PC-9 (cell line): ENCODE measurements at regions of chr2 and their contacts with region 1.

Region 1: DNA sequence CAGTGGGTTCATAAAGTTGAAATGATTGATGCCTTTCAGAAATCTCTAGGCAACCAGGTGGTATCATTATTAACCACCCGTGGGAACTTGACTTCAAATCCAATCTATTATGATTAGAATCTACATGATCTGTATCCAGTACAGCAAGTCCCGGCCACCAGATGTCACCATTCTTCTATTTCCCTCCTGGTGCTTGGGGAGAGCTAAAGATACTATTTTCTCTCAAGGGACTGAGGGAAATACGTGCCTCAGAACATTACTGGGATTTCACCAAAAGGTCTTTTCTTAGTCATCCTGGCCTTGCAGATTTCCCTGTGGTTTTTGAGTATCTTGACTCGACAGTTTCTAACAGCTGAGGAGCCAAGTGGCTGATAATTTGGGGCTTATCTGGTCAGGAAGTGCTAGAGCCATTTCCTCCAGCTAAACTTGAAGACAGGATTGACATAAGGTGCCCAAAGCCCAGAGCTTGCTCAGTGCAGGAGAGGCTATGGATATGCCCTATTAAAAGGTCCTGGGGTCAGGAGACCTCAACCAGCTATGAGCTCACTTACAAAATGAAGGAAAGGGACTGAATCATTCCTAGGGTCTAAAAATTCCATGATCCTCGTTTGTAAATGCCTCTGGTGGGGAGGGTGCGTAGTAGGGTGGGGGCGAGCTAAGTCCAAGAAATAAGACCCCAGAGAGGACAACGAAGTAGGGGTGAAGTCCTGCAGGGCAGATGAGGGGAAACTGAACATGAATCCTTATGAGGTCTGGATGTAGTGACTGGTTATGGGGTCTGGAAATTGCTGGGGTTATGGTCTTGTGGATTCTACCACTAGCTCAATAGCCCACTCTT is 135.4 kb upstream of the MGAT5 start:
- DNase-seq: peak; percentile 76 to 85
- H3K4me3 ChIP-seq: no peak overlapping the region
- H3K27ac ChIP-seq: peak overlapping the region; percentile 30; the same call in 1 of the 2 replicates
- H3K4me1 ChIP-seq: peaks cover 12% of the 10 kb centered on the region
- H3K27me3 ChIP-seq: no peaks in the 10 kb centered on the region
- CTCF ChIP-seq: peak; percentile 81

Region 2: DNA sequence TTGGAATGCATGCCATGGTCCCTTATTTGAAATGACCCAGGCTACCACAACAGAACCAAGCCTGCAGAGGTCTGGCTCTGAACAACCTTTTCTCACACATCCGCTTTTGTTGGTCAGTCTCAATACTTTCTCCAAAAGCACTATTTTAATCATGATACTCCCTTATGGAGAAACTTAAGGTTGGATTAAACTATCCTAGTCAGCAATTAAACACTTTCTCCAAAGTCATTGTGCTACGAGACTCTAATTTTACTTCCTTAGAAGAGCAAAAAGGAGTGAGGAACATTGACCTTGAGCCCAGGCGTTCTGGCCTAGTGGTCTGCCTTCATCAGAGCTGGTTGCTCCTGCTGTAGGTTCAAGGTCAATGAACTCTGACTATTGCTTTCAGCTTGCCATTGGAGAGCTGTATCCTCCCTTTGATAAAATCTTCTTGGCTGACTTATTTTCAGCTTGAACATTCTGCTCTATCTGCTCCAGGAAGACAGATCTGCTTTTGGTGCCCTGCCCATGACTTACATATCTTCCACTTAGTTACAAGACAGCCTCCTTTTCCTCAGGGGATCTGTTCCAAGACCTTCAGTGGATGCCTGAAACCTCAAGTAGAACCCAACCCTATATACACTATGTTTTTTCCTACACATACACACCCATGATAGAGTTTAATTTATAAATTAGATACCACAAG is 641.4 kb before region 1 on chr2:
- CTCF ChIA-PET with region 1: no interaction called
- POLR2A ChIA-PET with region 1: no interaction called
- intact Hi-C with region 1: no loop called
- DNase-seq: no peak
- H3K4me3 ChIP-seq: no peak overlapping the region
- H3K27ac ChIP-seq: no peak overlapping the region
- H3K4me1 ChIP-seq: no peaks in the 10 kb centered on the region
- H3K27me3 ChIP-seq: peaks cover 4% of the 10 kb centered on the region; the same call in 1 of the 2 replicates
- CTCF ChIP-seq: no peak

Region 3: DNA sequence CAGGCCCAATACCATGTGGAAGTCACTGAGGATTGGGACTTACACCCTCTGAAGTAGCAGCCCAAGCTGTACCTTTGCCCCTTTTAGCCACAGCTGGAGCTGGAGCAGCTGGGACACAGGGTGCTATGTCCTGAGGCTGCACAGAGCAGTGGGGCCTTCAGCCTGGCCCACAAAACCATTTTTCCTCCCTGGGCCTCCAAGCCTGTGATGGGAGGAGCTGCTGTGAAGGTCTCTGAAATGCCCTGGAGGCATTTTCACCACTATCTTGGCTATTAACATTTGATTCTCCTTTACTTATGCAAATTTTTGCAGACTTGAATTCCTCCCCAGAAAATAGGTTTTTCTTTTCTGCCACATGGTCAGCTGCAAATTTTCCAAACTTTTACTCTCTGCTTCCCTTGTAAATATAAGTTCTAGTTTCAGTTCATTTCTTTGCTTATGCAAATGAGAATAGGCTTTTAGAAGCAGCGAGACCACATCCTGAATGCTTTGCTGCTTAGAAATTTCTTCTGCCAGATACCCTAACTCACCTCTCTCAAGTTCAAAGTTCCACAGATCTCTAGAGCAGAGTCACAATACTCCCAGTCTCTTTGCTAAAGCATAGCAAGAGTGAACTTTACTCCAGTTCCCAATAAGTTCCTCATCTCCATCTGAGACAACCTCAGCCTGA is 78.5 kb before region 1 on chr2:
- CTCF ChIA-PET with region 1: no interaction called
- POLR2A ChIA-PET with region 1: no interaction called
- intact Hi-C with region 1: no loop called
- DNase-seq: no peak
- H3K4me3 ChIP-seq: no peak overlapping the region
- H3K27ac ChIP-seq: no peak overlapping the region
- H3K4me1 ChIP-seq: no peaks in the 10 kb centered on the region
- H3K27me3 ChIP-seq: peaks cover 21% of the 10 kb centered on the region
- CTCF ChIP-seq: no peak

Region 4: GRCh38 chr2:134189009-134189720 is 70.7 kb after region 1 on chr2:
- CTCF ChIA-PET with region 1: interaction called, 3 read pairs
- POLR2A ChIA-PET with region 1: no interaction called
- intact Hi-C with region 1: loop called (anchors 5 kb)
- DNase-seq: peak; percentile 67 to 95
- H3K4me3 ChIP-seq: peak overlapping the region; percentile 34; the same call in 1 of the 2 replicates
- H3K27ac ChIP-seq: peak overlapping the region; percentile 99
- H3K4me1 ChIP-seq: peaks cover 29% of the 10 kb centered on the region
- H3K27me3 ChIP-seq: no peaks in the 10 kb centered on the region
- CTCF ChIP-seq: no peak

Region 5: GRCh38 chr2:134245340-134245984 is 127.0 kb after region 1 on chr2:
- CTCF ChIA-PET with region 1: interaction called, 14 read pairs
- POLR2A ChIA-PET with region 1: interaction called, 6 read pairs
- intact Hi-C with region 1: loop called (anchors 1 kb)
- DNase-seq: peak; percentile 46 to 63
- H3K4me3 ChIP-seq: no peak overlapping the region
- H3K27ac ChIP-seq: no peak overlapping the region
- H3K4me1 ChIP-seq: no peaks in the 10 kb centered on the region
- H3K27me3 ChIP-seq: no peaks in the 10 kb centered on the region
- CTCF ChIP-seq: peak; percentile 89

Region 6: DNA sequence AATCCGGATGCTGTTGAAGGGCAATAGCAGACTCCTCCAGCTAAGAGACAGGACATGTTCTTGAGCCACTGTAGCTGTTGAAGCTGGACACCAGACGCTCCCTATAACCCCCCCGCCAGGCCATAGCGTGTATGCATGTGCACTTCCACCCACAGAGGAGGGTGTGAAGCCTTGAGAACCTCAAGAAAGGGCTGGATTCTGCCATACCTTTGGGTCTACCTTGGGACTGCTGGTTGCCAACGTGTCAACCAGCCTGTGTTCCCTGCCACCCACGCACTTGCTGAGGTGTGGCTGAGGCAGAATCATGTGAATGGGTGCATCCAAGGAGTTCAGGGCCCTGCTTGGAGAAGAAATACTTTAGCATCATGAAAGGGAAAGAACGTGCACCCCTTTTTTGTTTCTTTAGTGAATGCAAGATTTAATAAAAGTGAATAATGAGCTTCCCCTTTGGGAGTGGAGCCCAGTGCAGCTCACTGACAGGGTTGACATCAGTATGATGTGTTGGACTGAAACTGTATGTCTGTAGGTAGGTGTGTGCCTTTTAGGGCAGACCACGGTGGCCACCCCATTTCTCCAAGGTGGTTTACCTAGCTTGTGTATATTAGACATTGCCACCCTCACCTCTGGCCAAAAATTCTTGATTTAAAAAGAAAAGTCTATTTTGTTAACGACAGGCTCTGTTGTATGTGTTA is 333.7 kb after region 1 on chr2:
- CTCF ChIA-PET with region 1: interaction called, 4 read pairs
- POLR2A ChIA-PET with region 1: interaction called, 3 read pairs
- intact Hi-C with region 1: loop called (anchors 1 kb)
- DNase-seq: no peak
- H3K4me3 ChIP-seq: no peak overlapping the region
- H3K27ac ChIP-seq: no peak overlapping the region
- H3K4me1 ChIP-seq: no peaks in the 10 kb centered on the region
- H3K27me3 ChIP-seq: no peaks in the 10 kb centered on the region
- CTCF ChIP-seq: no peak